Panc1 (cell line): ENCODE measurements at regions of chr6 and their contacts with region 1.

Region 1: DNA sequence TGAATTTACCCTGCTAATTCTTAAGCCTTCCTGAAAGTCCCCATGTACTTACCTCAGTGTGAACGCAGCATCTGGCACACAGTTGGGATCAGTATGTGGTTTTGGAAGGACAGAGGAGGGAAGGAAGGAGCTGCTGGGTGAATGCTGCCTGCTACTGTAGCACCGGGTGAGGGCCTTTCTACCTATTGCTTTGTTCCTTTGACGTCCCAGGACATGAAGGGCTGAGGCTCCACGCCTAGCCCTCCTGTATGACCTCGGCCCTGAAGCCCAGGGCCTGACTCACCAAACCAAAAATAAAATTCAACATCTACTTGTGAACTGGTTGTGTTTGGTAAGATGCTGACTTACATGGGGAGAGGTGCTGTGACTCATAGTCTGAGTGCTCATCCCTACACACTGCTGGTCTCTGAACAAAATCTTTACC is 51.1 kb downstream of the ARID1B start:
- DNase-seq: peak; percentile 50
- ATAC-seq: peak; percentile 61
- H3K4me3 ChIP-seq: no peak overlapping the region
- H3K27ac ChIP-seq: no peak overlapping the region
- H3K4me1 ChIP-seq: peaks cover 28% of the 10 kb centered on the region
- H3K27me3 ChIP-seq: no peaks in the 10 kb centered on the region
- CTCF ChIP-seq: no peak

Region 2: GRCh38 chr6:156729248-156729647 is 99.0 kb before region 1 on chr6:
- CTCF ChIA-PET with region 1: no interaction called
- POLR2A ChIA-PET with region 1: interaction called, 11 read pairs
- in situ Hi-C with region 1: no loop called
- intact Hi-C with region 1: no loop called
- DNase-seq: no peak
- ATAC-seq: no peak
- H3K4me3 ChIP-seq: no peak overlapping the region
- H3K27ac ChIP-seq: no peak overlapping the region
- H3K4me1 ChIP-seq: no peaks in the 10 kb centered on the region
- H3K27me3 ChIP-seq: no peaks in the 10 kb centered on the region
- CTCF ChIP-seq: no peak

Region 3: GRCh38 chr6:156794546-156795354 is 33.5 kb before region 1 on chr6:
- CTCF ChIA-PET with region 1: no interaction called
- POLR2A ChIA-PET with region 1: interaction called, 11 read pairs
- in situ Hi-C with region 1: no loop called
- intact Hi-C with region 1: no loop called
- DNase-seq: no peak
- ATAC-seq: no peak
- H3K4me3 ChIP-seq: no peak overlapping the region
- H3K27ac ChIP-seq: no peak overlapping the region
- H3K4me1 ChIP-seq: peaks cover 10% of the 10 kb centered on the region
- H3K27me3 ChIP-seq: no peaks in the 10 kb centered on the region
- CTCF ChIP-seq: no peak

Region 4: DNA sequence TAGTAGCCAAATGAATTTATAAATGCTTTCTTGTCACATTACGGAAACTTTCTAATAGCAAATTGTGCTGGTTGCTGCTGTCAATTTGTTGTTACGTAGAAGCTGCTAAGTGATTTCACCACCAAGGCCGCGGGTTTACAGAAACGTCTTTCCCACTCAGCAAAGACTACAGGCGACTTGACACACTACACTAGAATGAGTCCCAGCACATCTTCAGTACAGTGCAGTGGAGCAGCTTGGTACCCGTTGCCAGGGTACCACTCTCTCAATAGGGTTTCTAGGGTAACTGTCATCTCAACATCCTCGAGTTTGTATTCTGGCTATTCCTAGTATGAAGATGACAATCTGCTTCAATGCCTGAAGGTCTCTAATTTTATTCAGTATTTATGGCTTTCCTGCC is 530.0 kb after region 1 on chr6:
- CTCF ChIA-PET with region 1: no interaction called
- POLR2A ChIA-PET with region 1: no interaction called
- in situ Hi-C with region 1: no loop called
- intact Hi-C with region 1: no loop called
- DNase-seq: no peak
- ATAC-seq: no peak
- H3K4me3 ChIP-seq: no peak overlapping the region
- H3K27ac ChIP-seq: no peak overlapping the region
- H3K4me1 ChIP-seq: no peaks in the 10 kb centered on the region
- H3K27me3 ChIP-seq: peaks cover 5% of the 10 kb centered on the region; the same call in 1 of the 2 replicates
- CTCF ChIP-seq: no peak

Region 5: GRCh38 chr6:157741948-157742556 is 913.8 kb after region 1 on chr6:
- CTCF ChIA-PET with region 1: no interaction called
- POLR2A ChIA-PET with region 1: interaction called, 10 read pairs
- in situ Hi-C with region 1: no loop called
- intact Hi-C with region 1: no loop called
- DNase-seq: no peak
- ATAC-seq: no peak
- H3K4me3 ChIP-seq: no peak overlapping the region
- H3K27ac ChIP-seq: no peak overlapping the region
- H3K4me1 ChIP-seq: no peaks in the 10 kb centered on the region
- H3K27me3 ChIP-seq: no peaks in the 10 kb centered on the region
- CTCF ChIP-seq: no peak